Right lobe of liver (tissue), 6 donors: ENCODE measurements at regions of chr5 and their contacts with region 1.

Region 1: GRCh38 chr5:136249678-136250266 is 56.8 kb upstream of the SMIM32 start:
- DNase-seq: peak; percentile 62 to 69 (median 62)
- ATAC-seq: peak; percentile 89 to 95 (median 94)
- H3K4me3 ChIP-seq: no peak overlapping the region
- H3K27ac ChIP-seq: no peak overlapping the region
- H3K4me1 ChIP-seq: no peaks in the 10 kb centered on the region
- H3K27me3 ChIP-seq: no peaks in the 10 kb centered on the region
- CTCF ChIP-seq: peak; percentile 80 to 91 (median 84)
- POLR2A ChIP-seq: no peak

Region 2: GRCh38 chr5:136108180-136108611 is 141.6 kb before region 1 on chr5:
- intact Hi-C with region 1: no loop called
- DNase-seq: no peak
- ATAC-seq: no peak
- H3K4me3 ChIP-seq: no peak overlapping the region
- H3K27ac ChIP-seq: peak overlapping the region in 1 of 3 donors; percentile 51
- H3K4me1 ChIP-seq: peaks cover 0 to 6% (median 3%) of the 10 kb centered on the region in 4 donors
- H3K27me3 ChIP-seq: no peaks in the 10 kb centered on the region
- CTCF ChIP-seq: no peak
- POLR2A ChIP-seq: no peak

Region 3: GRCh38 chr5:136424835-136425584 is 175.2 kb after region 1 on chr5:
- intact Hi-C with region 1: loop called (anchors 10 kb)
- DNase-seq: peak; percentile 76 to 80 (median 77)
- ATAC-seq: peak; percentile 78 to 87 (median 86)
- H3K4me3 ChIP-seq: no peak overlapping the region
- H3K27ac ChIP-seq: no peak overlapping the region
- H3K4me1 ChIP-seq: no peaks in the 10 kb centered on the region
- H3K27me3 ChIP-seq: no peaks in the 10 kb centered on the region
- CTCF ChIP-seq: peak; percentile 47 to 81 (median 60)
- POLR2A ChIP-seq: no peak

Region 4: DNA sequence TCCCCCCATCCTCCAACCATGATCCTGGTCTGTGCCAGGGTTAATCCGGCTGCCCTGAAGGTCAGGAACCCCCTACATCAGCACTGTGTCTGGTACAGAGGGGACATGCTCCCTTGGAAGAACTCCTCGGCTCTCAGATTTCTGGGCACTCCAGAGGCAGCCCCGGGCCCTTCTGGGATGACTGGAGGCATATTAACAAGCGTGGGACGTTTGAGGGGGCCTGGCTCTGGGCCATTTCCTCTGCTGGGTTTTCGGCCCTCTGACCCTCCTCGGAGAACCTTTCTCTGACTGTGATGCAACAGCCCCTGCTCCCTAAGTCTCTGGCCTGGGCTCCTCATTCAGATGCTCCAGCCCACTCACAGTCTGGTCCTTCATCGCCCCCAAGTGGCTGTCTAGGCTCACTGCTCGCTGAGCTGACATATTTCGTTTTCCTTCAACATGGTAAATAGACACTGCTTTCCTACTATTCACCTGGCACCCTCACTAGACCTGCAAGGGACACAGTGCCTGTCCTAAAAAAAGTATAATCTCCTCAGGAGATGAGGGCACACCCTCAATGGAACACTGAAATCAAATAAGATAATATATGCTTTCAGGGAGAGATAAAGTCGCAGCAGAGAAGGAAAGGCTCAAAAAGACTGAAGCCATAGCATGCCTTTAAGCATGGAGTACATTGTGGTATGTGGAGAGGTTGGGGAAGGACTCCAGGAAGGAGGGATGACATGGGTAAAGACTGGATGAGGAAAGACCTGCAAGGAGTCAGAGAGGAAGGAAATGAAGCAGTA is 520.3 kb after region 1 on chr5:
- intact Hi-C with region 1: loop called in 1 of 2 experiments (anchors 10 kb)
- DNase-seq: peak in 2 of 3 donors; percentile 40 to 52
- ATAC-seq: peak; percentile 69 to 83 (median 78)
- H3K4me3 ChIP-seq: no peak overlapping the region
- H3K27ac ChIP-seq: no peak overlapping the region
- H3K4me1 ChIP-seq: no peaks in the 10 kb centered on the region
- H3K27me3 ChIP-seq: no peaks in the 10 kb centered on the region
- CTCF ChIP-seq: peak; percentile 47 to 65 (median 59)
- POLR2A ChIP-seq: no peak